OCI-LY7 (cell line): ENCODE measurements at regions of chr4 and their contacts with region 1.

Region 1: DNA sequence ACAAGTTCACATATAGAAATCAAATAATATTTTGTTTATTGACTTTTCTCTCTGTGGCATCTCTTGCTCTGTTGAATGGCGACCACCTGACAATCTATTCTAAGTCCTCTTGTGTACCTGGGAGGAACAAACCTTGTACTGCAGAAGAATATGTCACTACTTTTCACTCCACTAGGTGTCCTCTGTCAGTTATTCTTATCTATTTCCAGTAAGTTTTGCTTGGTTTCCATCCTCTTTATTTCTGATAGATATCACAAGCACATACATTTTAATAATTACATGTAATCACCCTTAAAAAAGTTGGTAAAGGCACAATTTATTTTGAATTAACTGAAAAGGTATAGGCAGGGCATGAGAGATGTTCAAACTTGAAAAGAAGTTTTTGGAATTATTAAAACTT is 238.4 kb downstream of the SNCA start:
- DNase-seq: peak; percentile 5
- H3K4me3 ChIP-seq: no peak overlapping the region
- H3K27ac ChIP-seq: no peak overlapping the region
- H3K4me1 ChIP-seq: no peaks in the 10 kb centered on the region
- CTCF ChIP-seq: peak; percentile 61

Region 2: DNA sequence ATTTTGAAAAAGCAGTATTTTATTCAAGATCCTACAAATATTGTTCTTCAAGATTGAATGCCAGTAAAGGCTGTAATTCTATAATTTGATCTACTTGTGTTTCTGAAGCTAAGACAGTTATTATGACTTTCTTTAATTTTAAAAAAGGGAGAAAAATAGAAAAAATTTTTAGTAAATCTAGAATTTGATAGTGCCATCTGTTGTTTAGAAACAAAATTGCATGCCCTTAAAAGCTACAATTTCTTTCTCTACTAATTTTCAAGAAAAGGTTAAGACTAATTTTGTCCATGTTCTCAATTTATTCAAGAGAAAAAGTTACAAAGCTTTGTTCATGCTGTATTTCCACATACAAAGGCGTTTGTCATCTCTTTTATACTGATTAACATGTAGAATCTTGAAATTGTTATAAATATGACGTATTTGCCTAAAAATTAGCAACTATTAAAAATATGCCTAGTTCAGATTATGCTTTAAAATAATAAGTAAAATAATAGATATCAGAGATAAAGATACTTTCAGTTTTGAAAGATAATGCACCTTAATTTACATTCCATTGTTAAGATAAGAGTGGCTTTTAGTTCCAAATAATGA is 270.5 kb after region 1 on chr4:
- CTCF ChIA-PET with region 1: no interaction called
- POLR2A ChIA-PET with region 1: no interaction called
- intact Hi-C with region 1: no loop called
- DNase-seq: no peak
- H3K4me3 ChIP-seq: no peak overlapping the region
- H3K27ac ChIP-seq: no peak overlapping the region
- H3K4me1 ChIP-seq: no peaks in the 10 kb centered on the region
- CTCF ChIP-seq: peak; percentile 73

Region 3: DNA sequence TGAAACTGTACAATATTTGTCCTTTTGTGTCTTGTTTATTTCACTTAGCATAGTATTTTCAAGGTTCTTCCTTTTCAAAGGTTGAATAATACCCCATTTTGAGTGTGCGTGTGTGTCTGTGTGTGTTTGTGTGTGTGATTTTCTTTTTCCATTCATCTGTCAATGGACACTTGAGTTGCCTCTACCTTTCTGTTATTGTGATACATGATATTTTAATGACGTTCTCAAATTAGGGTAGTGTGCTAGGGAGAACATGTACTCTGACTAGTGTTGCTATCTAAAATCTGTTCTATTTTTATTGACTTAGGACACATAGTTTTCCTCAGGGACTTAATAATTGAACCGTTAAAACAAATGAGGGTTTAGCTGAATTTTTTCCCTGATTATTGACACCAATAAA is 305.9 kb after region 1 on chr4:
- CTCF ChIA-PET with region 1: no interaction called
- POLR2A ChIA-PET with region 1: no interaction called
- intact Hi-C with region 1: loop called (anchors 5 kb)
- DNase-seq: no peak
- H3K4me3 ChIP-seq: no peak overlapping the region
- H3K27ac ChIP-seq: no peak overlapping the region
- H3K4me1 ChIP-seq: no peaks in the 10 kb centered on the region
- CTCF ChIP-seq: no peak

Region 4: DNA sequence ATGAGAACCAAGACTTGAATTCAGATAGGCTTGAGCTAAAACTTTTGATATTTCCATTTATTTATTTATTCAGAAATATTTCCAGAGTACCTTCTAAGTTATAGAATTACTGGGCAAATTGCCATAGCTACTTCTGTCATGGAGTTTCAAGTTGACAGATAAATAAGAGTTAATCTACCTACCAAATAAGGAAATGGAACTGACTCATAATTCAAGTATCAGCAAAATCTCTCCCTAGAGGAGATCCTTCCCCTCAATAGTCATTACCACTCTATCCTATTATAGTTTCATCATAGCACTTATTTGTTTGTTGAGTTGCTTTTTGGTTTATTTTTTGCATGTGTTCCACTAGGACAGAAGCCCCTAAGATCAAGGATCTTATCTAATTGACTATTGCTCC is 479.8 kb after region 1 on chr4:
- CTCF ChIA-PET with region 1: no interaction called
- POLR2A ChIA-PET with region 1: no interaction called
- intact Hi-C with region 1: no loop called
- DNase-seq: no peak
- H3K4me3 ChIP-seq: no peak overlapping the region
- H3K27ac ChIP-seq: no peak overlapping the region
- H3K4me1 ChIP-seq: no peaks in the 10 kb centered on the region
- CTCF ChIP-seq: no peak